ENCODE measurements at regions of chr9 and their contacts with region 1.

Region 1: GRCh38 chr9:134325817-134326723 is at the start of gene RXRA:
- DNase-seq: peak; percentile 80
- H3K4me3 Mint-ChIP-seq: peak within 1 kb of the TSS; percentile 69
- H3K27ac Mint-ChIP-seq: no peak within 1 kb of the TSS
- H3K4me1 Mint-ChIP-seq: peaks cover 19% of the 10 kb centered on the region
- H3K27me3 Mint-ChIP-seq: no peaks in the 10 kb centered on the region
- CTCF ChIP-seq: no peak
- total RNA-seq, gene RXRA: 15.0 and 20.4 TPM in 2 replicates

Region 2: GRCh38 chr9:134434894-134435506 is 108.9 kb after region 1 on chr9:
- CTCF ChIA-PET with region 1: no interaction called
- intact Hi-C with region 1: loop called (anchors 10 kb)
- DNase-seq: peak; percentile 81
- H3K4me3 Mint-ChIP-seq: no peak overlapping the region
- H3K27ac Mint-ChIP-seq: no peak overlapping the region
- H3K4me1 Mint-ChIP-seq: no peaks in the 10 kb centered on the region
- H3K27me3 Mint-ChIP-seq: no peaks in the 10 kb centered on the region
- CTCF ChIP-seq: no peak